Activated B cell treated with CpG ODN at 0.5 μM for 24 hours (primary cell): ENCODE measurements at regions of chrX and their contacts with region 1.

Region 1: GRCh38 chrX:102067966-102068708 is 57.3 kb upstream of the TCEAL2 start:
- DNase-seq: no peak
- ATAC-seq: no peak
- H3K4me3 Mint-ChIP-seq: no peak overlapping the region
- H3K27ac Mint-ChIP-seq: no peak overlapping the region
- H3K4me1 Mint-ChIP-seq: no peaks in the 10 kb centered on the region
- H3K27me3 Mint-ChIP-seq: peaks cover 3% of the 10 kb centered on the region
- CTCF ChIP-seq: no peak

Region 2: DNA sequence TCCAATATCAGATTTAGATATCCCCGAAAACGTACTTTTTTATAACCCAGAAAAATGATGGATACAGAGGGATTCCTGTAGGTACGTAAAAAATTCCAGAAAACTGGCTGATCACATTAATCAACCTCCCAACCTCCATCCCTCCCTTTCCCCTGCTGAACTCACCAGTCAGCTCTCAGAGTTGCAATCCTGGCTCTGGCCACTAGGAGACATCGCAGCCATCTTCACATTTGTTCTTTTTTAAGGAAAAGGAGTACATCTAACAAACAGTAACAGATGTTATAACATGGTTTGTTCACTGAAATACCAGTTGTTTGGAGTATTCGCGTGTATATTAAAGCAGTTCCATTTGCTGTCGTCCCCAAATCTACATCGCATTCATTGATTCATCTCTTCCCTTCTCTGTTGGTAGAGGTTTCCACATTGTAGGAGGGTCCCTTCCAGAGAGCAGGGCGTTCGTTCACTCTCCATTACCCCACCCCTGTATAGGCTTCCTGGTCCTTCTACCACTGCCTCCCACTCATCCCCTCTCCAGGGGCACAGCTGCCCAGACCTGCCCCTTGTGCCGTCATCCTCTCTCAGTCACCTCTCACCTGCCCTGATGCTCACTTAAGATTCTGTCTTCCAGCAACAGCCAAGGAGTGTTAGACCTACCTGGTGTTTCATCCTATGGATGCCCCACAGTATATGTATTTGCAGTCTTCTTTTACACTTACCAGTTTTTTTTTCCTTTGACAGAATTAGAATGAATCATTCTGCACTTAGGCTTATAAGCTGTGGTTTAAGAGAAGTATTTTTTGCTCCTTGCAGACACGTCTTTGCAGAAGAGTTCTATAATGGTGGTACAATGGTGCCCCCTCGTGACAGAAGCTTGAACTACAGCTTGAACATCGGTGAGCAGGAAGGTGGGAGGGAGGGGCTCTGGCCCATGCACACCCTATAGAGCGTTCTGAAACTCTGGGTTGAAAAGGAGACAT is 832.1 kb after region 1 on chrX:
- CTCF ChIA-PET with region 1: interaction called, 13 read pairs
- POLR2A ChIA-PET with region 1: no interaction called
- intact Hi-C with region 1: no loop called
- DNase-seq: peak; percentile 31
- ATAC-seq: peak; percentile 69
- H3K4me3 Mint-ChIP-seq: no peak overlapping the region
- H3K27ac Mint-ChIP-seq: no peak overlapping the region
- H3K4me1 Mint-ChIP-seq: peaks cover 6% of the 10 kb centered on the region
- H3K27me3 Mint-ChIP-seq: no peaks in the 10 kb centered on the region
- CTCF ChIP-seq: peak; percentile 41

Region 3: DNA sequence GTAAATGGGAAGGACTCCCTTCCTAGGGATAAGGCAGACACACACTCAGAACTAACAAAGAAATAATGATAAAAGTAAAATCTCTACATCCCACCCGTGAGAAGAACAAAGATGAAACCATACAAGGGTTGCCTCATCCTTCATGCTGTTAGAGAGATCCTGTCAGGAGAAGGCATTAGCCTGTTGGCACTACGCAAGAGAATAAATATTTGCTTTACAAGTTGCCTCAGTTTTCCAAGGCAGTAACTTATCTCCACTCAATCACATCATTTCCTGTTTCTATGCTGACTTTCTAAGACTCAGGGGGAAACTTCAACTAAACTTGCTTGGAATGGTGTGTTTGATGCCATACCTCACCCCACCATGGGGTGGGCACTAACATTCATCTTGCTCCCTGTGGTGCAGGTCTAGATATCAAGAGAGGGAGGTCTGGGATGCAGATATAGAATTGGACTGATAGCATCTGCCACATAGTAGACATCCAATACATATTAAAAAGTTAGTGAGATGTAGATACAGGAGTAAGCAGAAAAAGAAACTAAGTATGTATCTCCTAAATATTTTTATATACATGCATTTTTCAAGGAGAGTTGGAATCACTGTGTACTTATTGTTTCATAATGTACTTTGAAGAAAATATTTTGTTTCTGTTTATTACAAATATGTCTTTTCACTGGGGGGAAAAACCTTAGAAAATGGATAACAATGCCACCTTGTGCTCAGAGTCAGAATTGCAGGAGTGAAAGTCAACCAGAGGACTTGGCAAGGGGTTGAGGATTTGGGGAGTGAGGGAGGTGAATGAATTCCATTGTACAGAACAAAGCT is 1089.6 kb after region 1 on chrX:
- CTCF ChIA-PET with region 1: no interaction called
- POLR2A ChIA-PET with region 1: no interaction called
- intact Hi-C with region 1: loop called (anchors 5 kb)
- DNase-seq: no peak
- ATAC-seq: no peak
- H3K4me3 Mint-ChIP-seq: no peak overlapping the region
- H3K27ac Mint-ChIP-seq: no peak overlapping the region
- H3K4me1 Mint-ChIP-seq: no peaks in the 10 kb centered on the region
- H3K27me3 Mint-ChIP-seq: no peaks in the 10 kb centered on the region
- CTCF ChIP-seq: no peak